ENCODE measurements at regions of chr15 and their contacts with region 1.

Region 1: DNA sequence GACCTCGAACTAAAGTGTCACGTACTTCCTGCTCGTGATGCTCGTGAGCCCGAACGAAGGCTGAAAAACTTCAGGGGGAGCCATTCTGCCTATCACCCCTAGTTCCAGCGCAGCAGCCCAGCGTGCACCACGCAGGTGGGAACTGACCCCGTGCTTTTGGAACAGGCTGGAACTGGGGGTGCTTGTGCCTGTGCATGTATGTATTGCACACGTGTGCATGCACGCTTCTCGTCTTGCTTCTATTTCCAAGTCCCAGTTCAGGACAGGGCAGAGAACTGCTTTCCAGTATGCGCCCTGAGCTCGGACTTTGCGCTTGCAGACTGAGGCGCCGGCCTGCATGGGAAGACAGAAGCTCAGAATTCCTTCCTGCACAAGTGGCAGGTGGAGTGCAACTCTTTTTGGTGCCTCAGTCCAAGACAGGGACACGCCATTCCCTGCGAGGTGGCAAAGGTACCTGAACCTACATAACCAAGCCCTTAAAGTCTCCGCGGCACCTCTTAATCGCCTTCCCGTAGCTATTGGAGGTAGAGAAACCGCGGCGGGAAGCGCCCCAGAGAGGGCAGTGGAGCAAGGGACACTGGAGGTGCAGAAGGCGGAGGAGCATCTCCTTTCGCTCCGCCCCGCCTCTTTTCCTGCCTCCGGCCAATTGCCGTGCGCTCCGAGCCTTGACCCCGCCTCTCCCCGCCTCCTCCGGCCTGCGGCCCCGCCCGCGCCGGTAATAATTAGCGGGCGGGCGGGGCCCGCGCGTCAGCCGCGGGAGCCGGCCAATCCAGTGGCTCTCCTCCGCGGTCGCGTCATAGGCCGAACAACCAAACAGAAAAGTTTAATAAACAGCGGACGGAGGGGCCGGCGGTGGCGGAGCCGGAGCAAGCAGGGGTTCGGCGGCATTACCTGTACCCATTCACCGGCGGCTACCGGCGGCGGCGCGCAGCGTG is at the start of gene ZFAND6:
- DNase-seq: peak; percentile 96
- H3K4me3 Mint-ChIP-seq: peak within 1 kb of the TSS; percentile 87
- H3K27ac Mint-ChIP-seq: peak within 1 kb of the TSS; percentile 89
- H3K4me1 Mint-ChIP-seq: peaks cover 27% of the 10 kb centered on the region
- H3K27me3 Mint-ChIP-seq: no peaks in the 10 kb centered on the region
- total RNA-seq, gene ZFAND6: 28.9 to 29.6 TPM

Region 2: GRCh38 chr15:79535536-79535935 is 523.6 kb before region 1 on chr15:
- CTCF ChIA-PET with region 1: no interaction called
- intact Hi-C with region 1: no loop called
- DNase-seq: no peak
- H3K4me3 Mint-ChIP-seq: no peak overlapping the region
- H3K27ac Mint-ChIP-seq: no peak overlapping the region
- H3K4me1 Mint-ChIP-seq: no peaks in the 10 kb centered on the region
- H3K27me3 Mint-ChIP-seq: peaks cover 6% of the 10 kb centered on the region

Region 3: DNA sequence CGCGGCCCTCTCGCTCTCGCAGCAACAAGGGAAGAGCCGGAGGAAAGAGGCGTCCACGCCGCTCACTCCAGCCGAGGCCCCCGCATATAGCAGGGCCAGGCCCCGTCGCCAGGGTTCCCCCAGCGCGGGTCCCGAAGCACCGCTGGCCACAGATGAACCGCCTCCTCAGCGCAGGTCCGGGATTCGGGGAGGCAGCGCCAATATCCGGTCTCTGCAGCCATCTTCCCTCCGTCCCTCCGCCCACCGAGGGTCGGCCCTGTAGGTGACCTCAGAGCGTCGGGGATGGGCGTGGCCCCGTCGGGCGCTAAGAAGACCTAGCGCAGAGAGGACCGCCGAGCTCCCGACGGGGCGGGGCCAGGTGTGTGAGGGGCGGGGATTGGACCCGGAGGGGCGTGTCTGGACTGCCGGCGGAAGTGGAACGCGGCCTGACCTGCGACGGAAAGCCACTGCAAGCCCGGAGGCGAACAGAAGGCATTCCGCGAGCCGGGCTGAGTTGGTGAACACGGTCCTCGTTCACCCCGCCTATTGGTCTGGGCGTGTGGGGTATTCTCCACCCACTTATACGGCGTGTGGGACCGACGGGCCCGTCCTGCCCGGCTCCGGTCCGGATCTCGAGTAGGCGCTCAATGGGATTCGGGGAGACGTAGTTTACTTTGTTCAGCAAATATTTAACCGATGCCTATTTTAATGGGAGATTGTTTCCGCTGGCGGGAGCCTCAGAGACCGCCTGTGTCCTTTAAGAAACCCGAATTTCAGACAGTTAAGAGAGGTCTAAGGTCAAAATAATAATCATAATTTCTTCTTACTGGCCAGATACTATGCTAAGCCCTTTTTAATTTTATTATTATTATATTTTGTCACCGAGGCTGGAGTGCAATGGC is 135.4 kb before region 1 on chr15:
- CTCF ChIA-PET with region 1: no interaction called
- intact Hi-C with region 1: loop called (anchors 1 kb)
- DNase-seq: peak; percentile 99
- H3K4me3 Mint-ChIP-seq: peak overlapping the region; percentile 86
- H3K27ac Mint-ChIP-seq: peak overlapping the region; percentile 95
- H3K4me1 Mint-ChIP-seq: peaks cover 25% of the 10 kb centered on the region
- H3K27me3 Mint-ChIP-seq: no peaks in the 10 kb centered on the region

Region 4: GRCh38 chr15:80105595-80106450 is 46.7 kb after region 1 on chr15:
- CTCF ChIA-PET with region 1: no interaction called
- intact Hi-C with region 1: loop called (anchors 1 kb)
- DNase-seq: no peak
- H3K4me3 Mint-ChIP-seq: no peak overlapping the region
- H3K27ac Mint-ChIP-seq: no peak overlapping the region
- H3K4me1 Mint-ChIP-seq: peaks cover 45% of the 10 kb centered on the region
- H3K27me3 Mint-ChIP-seq: no peaks in the 10 kb centered on the region

Region 5: GRCh38 chr15:80173022-80173759 is 114.1 kb after region 1 on chr15:
- CTCF ChIA-PET with region 1: interaction called, 14 read pairs
- intact Hi-C with region 1: loop called (anchors 1 kb)
- DNase-seq: peak; percentile 89
- H3K4me3 Mint-ChIP-seq: no peak overlapping the region
- H3K27ac Mint-ChIP-seq: no peak overlapping the region
- H3K4me1 Mint-ChIP-seq: no peaks in the 10 kb centered on the region
- H3K27me3 Mint-ChIP-seq: no peaks in the 10 kb centered on the region

Region 6: DNA sequence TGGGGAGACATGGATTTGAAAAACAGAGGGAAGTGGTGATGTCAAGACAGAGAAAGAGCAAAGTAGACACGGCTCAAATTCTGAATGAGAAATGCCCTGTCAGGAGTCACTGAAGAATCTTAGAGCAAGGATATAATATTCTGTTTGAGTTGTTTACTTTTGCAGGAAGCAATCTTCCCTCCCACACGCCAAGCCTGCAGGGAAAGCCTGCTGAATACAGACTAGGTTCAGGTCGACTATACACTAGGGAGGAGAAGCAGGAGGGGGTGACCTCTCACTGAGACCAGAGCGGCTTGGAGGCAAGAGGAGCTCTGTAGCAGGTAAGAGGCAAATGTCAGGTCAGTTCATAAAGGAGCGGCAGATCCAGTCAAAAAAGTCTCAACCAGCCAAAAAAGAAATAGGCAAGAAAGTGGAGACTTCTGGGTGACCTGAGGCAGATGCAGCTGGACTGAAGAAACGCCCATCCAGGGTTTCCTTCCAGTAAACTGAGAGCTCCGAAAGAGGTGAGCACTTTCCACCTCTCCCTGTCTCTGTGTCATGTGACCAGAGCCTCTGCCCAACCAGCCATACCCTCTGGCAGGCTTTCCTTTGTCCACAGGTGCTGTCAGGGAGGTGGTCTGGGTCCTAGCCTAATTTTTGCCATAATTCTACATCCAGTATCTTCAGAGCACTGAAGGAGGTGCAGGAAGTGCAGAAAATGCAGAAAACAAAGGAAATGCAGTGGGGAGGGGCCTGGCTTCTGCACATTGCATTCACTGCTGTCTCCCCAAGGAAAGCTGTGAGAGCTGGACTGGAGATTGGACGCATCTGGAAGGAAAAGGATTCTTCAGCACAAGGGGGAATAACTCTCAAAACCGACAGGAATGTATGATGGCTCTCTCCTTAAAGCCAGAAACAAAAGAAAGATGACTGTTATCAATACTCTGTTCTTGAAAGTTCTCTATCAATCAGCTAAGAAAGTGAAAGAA is 230.7 kb after region 1 on chr15:
- CTCF ChIA-PET with region 1: no interaction called
- intact Hi-C with region 1: no loop called
- DNase-seq: no peak
- H3K4me3 Mint-ChIP-seq: no peak overlapping the region
- H3K27ac Mint-ChIP-seq: no peak overlapping the region
- H3K4me1 Mint-ChIP-seq: no peaks in the 10 kb centered on the region
- H3K27me3 Mint-ChIP-seq: peaks cover 2% of the 10 kb centered on the region

Measured in activated naive CD4-positive, alpha-beta T cell treated with anti-CD3 and anti-CD28 coated beads for 36 hours (primary cell).